ENCODE measurements at regions of chrX and their contacts with region 1.

Region 1: DNA sequence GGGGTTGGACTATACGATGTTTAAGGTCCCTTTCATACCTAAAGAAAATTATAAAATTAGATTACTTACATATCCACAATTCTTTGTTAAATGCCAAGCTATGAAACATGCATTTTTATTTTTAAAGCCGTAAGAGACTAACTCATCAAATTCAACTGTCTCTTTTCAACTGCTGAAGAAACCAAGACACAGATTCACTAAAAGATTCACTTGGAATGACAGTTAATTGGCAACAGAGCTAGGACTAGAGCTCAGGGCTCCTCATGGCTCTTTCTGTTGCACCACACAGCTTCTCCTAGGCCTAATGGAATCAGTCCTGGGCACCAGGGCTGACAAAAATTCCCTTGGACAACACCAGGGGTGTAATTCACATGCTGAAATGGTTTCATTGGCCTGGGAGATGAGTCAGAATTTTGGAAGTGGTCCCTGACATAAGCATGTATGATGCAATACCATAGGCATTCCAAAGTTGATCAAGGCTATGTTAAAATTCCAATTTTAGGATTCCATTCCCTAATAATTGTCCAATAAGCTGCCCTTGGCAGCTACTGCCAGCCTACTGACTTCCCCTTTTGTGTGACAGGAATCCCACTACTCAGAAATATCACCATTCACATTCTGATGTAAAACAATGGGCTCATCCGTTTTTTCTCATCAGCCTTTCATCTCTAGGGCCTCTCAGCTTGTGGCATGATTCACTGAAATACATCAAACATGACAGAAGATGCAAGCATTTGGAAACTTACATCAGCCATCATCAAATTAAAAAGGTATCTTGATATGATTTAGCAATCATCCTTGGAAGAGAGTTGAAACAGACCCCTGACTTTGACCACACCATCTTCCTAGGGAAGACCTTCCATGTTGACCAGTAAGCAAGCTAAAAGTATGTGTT is 54.2 kb downstream of the PLAC1 start:
- DNase-seq: peak; percentile 73 to 79
- ATAC-seq: peak; percentile 87 to 88
- H3K4me3 ChIP-seq: no peak overlapping the region
- H3K27ac ChIP-seq: peak overlapping the region; percentile 94 to 99
- H3K4me1 ChIP-seq: peaks cover 35% of the 10 kb centered on the region
- CTCF ChIP-seq: no peak
- EP300 ChIP-seq: peak; percentile 19 to 82; a peak in 3 of 5 replicates
- POLR2A ChIP-seq: no peak
- RAD21 ChIP-seq: peak; percentile 43 to 44

Region 2: DNA sequence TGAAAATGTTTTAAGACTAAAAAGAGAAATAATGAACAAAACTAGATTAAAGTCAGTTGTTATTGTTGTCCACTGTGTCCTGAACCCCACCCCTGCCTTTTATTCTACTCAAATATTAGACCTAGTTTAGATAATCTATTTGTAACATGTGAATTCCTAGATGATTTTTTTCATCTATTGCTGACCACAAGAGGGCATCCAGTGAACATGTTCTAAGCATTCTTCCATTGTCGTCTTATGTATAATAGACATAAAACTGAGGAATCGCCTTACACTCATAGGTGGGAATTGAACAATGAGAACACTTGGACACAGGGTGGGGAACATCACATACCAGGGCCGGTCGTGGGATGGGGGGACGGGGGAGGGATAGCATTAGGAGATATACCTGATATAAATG is 180.4 kb before region 1 on chrX:
- CTCF ChIA-PET with region 1: no interaction called
- POLR2A ChIA-PET with region 1: no interaction called
- DNase-seq: peak; percentile 8 to 45
- ATAC-seq: peak in 1 of 2 experiments; percentile 62; a peak in 3 of 6 replicates
- H3K4me3 ChIP-seq: no peak overlapping the region
- H3K27ac ChIP-seq: no peak overlapping the region
- H3K4me1 ChIP-seq: 0 out of 3 replicates have a peak, but pooled peaks cover 3% of the 10 kb centered on the region
- CTCF ChIP-seq: peak; percentile 54
- EP300 ChIP-seq: no peak
- POLR2A ChIP-seq: no peak
- RAD21 ChIP-seq: peak; percentile 64 to 68

Region 3: DNA sequence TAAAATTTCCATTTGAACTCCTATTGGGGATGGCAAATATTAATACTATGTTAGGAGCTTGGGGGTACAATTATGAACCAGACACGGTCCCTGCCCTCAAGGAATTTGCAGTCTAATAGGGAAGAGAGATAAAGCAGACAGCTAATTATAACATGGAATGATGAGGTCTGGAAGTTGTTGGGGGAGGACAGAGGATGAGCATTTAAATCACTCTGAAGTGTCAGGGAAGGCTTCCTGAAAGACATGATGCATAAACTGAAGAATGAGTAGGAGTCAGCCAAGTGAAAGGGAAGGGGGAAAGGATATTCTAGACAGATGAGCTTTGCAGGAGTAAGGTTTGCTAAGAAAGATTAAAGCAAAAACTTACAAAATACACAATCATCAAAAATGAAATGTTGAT is 38.3 kb after region 1 on chrX:
- CTCF ChIA-PET with region 1: no interaction called
- POLR2A ChIA-PET with region 1: no interaction called
- DNase-seq: no peak
- ATAC-seq: no peak
- H3K4me3 ChIP-seq: no peak overlapping the region
- H3K27ac ChIP-seq: peak overlapping the region in 1 of 2 experiments; percentile 40; a peak in 1 of 6 replicates
- H3K4me1 ChIP-seq: peaks cover 3% of the 10 kb centered on the region; the same call in 1 of the 3 replicates
- CTCF ChIP-seq: no peak
- EP300 ChIP-seq: no peak
- POLR2A ChIP-seq: no peak
- RAD21 ChIP-seq: no peak

Region 4: GRCh38 chrX:134670134-134670924 is 66.3 kb after region 1 on chrX:
- CTCF ChIA-PET with region 1: interaction called, 10 read pairs
- POLR2A ChIA-PET with region 1: interaction called, 10 read pairs
- DNase-seq: peak; percentile 78 to 94
- ATAC-seq: peak; percentile 91
- H3K4me3 ChIP-seq: no peak overlapping the region
- H3K27ac ChIP-seq: peak overlapping the region; percentile 97 to 98
- H3K4me1 ChIP-seq: peaks cover 34% of the 10 kb centered on the region
- CTCF ChIP-seq: no peak
- EP300 ChIP-seq: peak; percentile 63 to 78; a peak in 4 of 5 replicates
- POLR2A ChIP-seq: no peak
- RAD21 ChIP-seq: peak; percentile 10 to 43; a peak in 3 of 5 replicates

Region 5: GRCh38 chrX:134849390-134849789 is 245.3 kb after region 1 on chrX:
- CTCF ChIA-PET with region 1: no interaction called
- POLR2A ChIA-PET with region 1: no interaction called
- DNase-seq: no peak
- ATAC-seq: no peak
- H3K4me3 ChIP-seq: no peak overlapping the region
- H3K27ac ChIP-seq: no peak overlapping the region
- H3K4me1 ChIP-seq: 0 out of 3 replicates have a peak, but pooled peaks cover 4% of the 10 kb centered on the region
- CTCF ChIP-seq: no peak
- EP300 ChIP-seq: no peak
- POLR2A ChIP-seq: no peak
- RAD21 ChIP-seq: no peak

Measured in A549 (cell line).